ENCODE measurements at regions of chr20 and their contacts with region 1.

Region 1: DNA sequence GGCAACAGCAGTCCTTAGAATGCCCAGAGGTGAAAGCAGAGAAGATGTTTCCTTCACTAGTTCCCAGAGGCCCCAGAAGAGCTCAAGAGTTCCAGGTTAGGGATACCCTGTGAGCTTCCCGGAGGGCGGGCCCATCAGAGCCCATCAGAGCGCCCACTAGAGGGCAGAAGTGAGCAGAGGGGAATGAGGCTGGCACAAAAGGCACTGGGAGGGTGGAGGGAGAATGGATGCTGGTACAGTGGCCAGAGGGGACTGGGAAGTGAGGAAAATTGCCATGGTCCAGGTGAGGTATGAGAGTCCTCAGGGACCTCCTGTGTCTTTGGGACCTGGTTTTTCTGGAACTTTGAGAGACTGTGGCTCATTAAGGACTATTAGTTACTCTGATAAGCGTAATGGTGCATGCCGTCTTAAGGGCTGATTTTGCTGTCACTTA is 57.3 kb downstream of the LINC00237 start:
- DNase-seq: peak; percentile 28
- ATAC-seq: peak; percentile 99
- H3K4me3 ChIP-seq: no peak overlapping the region
- H3K27ac ChIP-seq: no peak overlapping the region
- H3K4me1 ChIP-seq: no peaks in the 10 kb centered on the region
- H3K27me3 ChIP-seq: no peaks in the 10 kb centered on the region; the same call in 1 of the 2 replicates
- CTCF ChIP-seq: peak; percentile 54 to 98 (median 98)
- POLR2A ChIP-seq: no peak
- RAD21 ChIP-seq: peak; percentile 59

Region 2: DNA sequence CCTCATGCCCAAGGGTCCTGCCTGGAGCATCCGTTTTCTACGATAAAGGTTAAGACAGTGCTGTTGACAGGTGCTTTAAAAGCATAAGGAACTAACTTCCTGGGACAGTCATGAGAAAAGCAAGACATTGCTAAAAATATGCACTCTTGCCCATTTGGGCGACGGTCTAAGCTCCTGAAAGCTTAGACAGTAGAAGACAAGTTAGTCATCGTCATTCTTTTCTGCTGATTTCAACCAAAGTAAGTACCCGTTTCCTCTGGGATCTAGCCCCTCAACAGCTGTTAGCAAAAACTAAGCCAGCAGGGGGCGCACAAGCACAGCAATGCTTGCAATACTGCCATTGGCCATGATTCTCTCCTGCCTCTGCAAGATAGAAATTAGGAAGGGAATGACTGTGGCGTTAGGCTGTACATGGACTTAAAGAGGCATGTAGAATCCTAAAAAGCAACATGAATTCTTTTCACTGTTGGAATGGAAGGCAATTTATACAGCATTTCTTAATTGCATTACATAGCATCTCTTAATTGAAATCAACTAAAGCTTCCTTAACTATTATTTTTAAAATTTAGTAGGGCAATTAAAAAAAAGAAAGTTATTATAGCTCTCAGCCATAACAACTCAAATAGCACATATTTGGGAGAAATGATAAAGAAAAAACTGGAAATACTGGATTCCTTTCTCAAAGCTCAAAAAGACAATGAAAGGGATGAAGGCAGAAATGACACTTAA is 188.6 kb before region 1 on chr20:
- CTCF ChIA-PET with region 1: interaction called, 19 read pairs
- POLR2A ChIA-PET with region 1: no interaction called
- RAD21 ChIA-PET with region 1: interaction called in 1 of 2 experiments, 3 read pairs
- intact Hi-C with region 1: loop called (anchors 5 kb)
- DNase-seq: peak; percentile 69
- ATAC-seq: peak; percentile 96
- H3K4me3 ChIP-seq: no peak overlapping the region
- H3K27ac ChIP-seq: no peak overlapping the region
- H3K4me1 ChIP-seq: no peaks in the 10 kb centered on the region
- H3K27me3 ChIP-seq: no peaks in the 10 kb centered on the region
- CTCF ChIP-seq: peak; percentile 80 to 99 (median 94)
- POLR2A ChIP-seq: no peak
- RAD21 ChIP-seq: peak; percentile 74

Region 3: GRCh38 chr20:21027569-21027968 is 21.3 kb before region 1 on chr20:
- CTCF ChIA-PET with region 1: interaction called, 11 read pairs
- POLR2A ChIA-PET with region 1: no interaction called
- RAD21 ChIA-PET with region 1: no interaction called
- intact Hi-C with region 1: no loop called
- DNase-seq: peak; percentile 54
- ATAC-seq: peak; percentile 100
- H3K4me3 ChIP-seq: no peak overlapping the region
- H3K27ac ChIP-seq: no peak overlapping the region
- H3K4me1 ChIP-seq: peaks cover 0 to 8% of the 10 kb centered on the region in 2 experiments; a peak in 2 of 4 replicates
- H3K27me3 ChIP-seq: no peaks in the 10 kb centered on the region
- CTCF ChIP-seq: peak in 2 of 3 experiments; percentile 52 to 64; a peak in 4 of 6 replicates
- POLR2A ChIP-seq: no peak
- RAD21 ChIP-seq: peak; percentile 9

Region 4: GRCh38 chr20:21033817-21034216 is 15.0 kb before region 1 on chr20:
- CTCF ChIA-PET with region 1: interaction called, 17 read pairs
- POLR2A ChIA-PET with region 1: interaction called, 4 read pairs
- RAD21 ChIA-PET with region 1: no interaction called
- intact Hi-C with region 1: no loop called
- DNase-seq: no peak
- ATAC-seq: no peak
- H3K4me3 ChIP-seq: no peak overlapping the region
- H3K27ac ChIP-seq: no peak overlapping the region
- H3K4me1 ChIP-seq: no peaks in the 10 kb centered on the region
- H3K27me3 ChIP-seq: no peaks in the 10 kb centered on the region
- CTCF ChIP-seq: no peak
- POLR2A ChIP-seq: no peak
- RAD21 ChIP-seq: no peak

Region 5: GRCh38 chr20:21125849-21126580 is 77.2 kb after region 1 on chr20 and contains the start of gene KIZ:
- CTCF ChIA-PET with region 1: interaction called, 20 read pairs
- POLR2A ChIA-PET with region 1: no interaction called
- RAD21 ChIA-PET with region 1: interaction called, 3 to 4 read pairs
- intact Hi-C with region 1: loop called (anchors 5 kb)
- DNase-seq: peak; percentile 84
- ATAC-seq: peak; percentile 95
- H3K4me3 ChIP-seq: peak within 1 kb of the TSS; percentile 66 to 94
- H3K27ac ChIP-seq: peak within 1 kb of the TSS; percentile 66
- H3K4me1 ChIP-seq: peaks cover 7 to 17% of the 10 kb centered on the region in 2 experiments; a peak in 3 of 4 replicates
- H3K27me3 ChIP-seq: no peaks in the 10 kb centered on the region
- CTCF ChIP-seq: peak in 2 of 3 experiments; percentile 26 to 38; a peak in 3 of 6 replicates
- POLR2A ChIP-seq: peak; percentile 68
- RAD21 ChIP-seq: 0 out of 2 replicates have a peak, but pooled peaks have one; percentile 17
- total RNA-seq, gene KIZ: 17.6 TPM

Region 6: GRCh38 chr20:21505161-21505809 is 456.4 kb after region 1 on chr20:
- CTCF ChIA-PET with region 1: interaction called, 20 read pairs
- POLR2A ChIA-PET with region 1: no interaction called
- RAD21 ChIA-PET with region 1: no interaction called
- intact Hi-C with region 1: loop called (anchors 2 kb)
- DNase-seq: peak; percentile 28
- ATAC-seq: peak; percentile 60
- H3K4me3 ChIP-seq: peak overlapping the region; percentile 60 to 71
- H3K27ac ChIP-seq: peak overlapping the region; percentile 85
- H3K4me1 ChIP-seq: peaks cover 3 to 20% of the 10 kb centered on the region in 2 experiments; a peak in 3 of 4 replicates
- H3K27me3 ChIP-seq: no peaks in the 10 kb centered on the region
- CTCF ChIP-seq: peak; percentile 90 to 98 (median 95)
- POLR2A ChIP-seq: no peak
- RAD21 ChIP-seq: peak; percentile 96